PC-9 (cell line): ENCODE measurements at regions of chr11 and their contacts with region 1.

Region 1: GRCh38 chr11:236774-237767 is at the start of gene PSMD13:
- DNase-seq: peak in 1 of 2 experiments; percentile 78
- H3K4me3 ChIP-seq: peak within 1 kb of the TSS; percentile 65
- H3K27ac ChIP-seq: peak within 1 kb of the TSS; percentile 66
- H3K4me1 ChIP-seq: peaks cover 9% of the 10 kb centered on the region
- H3K27me3 ChIP-seq: no peaks in the 10 kb centered on the region
- CTCF ChIP-seq: no peak
- total RNA-seq, gene PSMD13: 143 and 147 TPM in 2 replicates

Region 2: GRCh38 chr11:207208-207862 is 29.7 kb before region 1 on chr11 and contains the starts of genes BET1L and RIC8A:
- CTCF ChIA-PET with region 1: no interaction called
- POLR2A ChIA-PET with region 1: no interaction called
- intact Hi-C with region 1: loop called (anchors 1 kb)
- DNase-seq: peak; percentile 89 to 95
- H3K4me3 ChIP-seq: peak within 1 kb of the TSS; percentile 67
- H3K27ac ChIP-seq: peak within 1 kb of the TSS; percentile 89
- H3K4me1 ChIP-seq: peaks cover 11% of the 10 kb centered on the region
- H3K27me3 ChIP-seq: no peaks in the 10 kb centered on the region
- CTCF ChIP-seq: no peak
- total RNA-seq, gene BET1L: 45.7 and 60.6 TPM in 2 replicates
- total RNA-seq, gene RIC8A: 115 and 129 TPM in 2 replicates

Region 3: GRCh38 chr11:215581-216037 is 21.5 kb before region 1 on chr11:
- CTCF ChIA-PET with region 1: no interaction called
- POLR2A ChIA-PET with region 1: interaction called, 16 read pairs
- intact Hi-C with region 1: no loop called
- DNase-seq: no peak
- H3K4me3 ChIP-seq: no peak overlapping the region
- H3K27ac ChIP-seq: no peak overlapping the region
- H3K4me1 ChIP-seq: no peaks in the 10 kb centered on the region
- H3K27me3 ChIP-seq: no peaks in the 10 kb centered on the region
- CTCF ChIP-seq: no peak

Region 4: DNA sequence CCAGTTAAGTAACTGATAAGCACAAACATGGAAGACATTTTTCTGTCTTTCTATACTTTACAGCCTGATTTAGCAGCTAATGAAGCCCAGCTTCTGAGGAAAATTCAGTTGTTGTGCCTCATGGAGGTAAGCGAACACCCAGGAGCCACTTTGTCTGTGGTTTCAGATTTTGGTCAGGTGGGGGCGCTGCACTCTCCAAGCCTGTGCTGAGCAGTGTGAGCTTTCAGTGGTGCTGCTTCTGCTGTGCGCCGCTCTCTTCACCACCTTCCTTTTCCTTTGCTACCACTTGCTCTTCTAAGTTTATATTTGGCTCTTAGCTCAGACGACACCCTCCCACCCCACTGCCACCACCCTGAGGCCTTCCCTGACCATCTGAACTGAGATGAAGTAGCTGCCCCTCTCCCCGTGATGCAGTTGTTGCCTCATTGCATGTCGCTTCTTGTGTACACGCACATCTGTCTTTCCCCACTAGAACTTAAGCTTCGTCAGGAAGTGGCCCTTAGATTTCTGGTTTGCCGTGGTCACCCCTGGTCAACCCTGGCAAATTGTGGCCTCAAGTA is 13.7 kb after region 1 on chr11:
- CTCF ChIA-PET with region 1: no interaction called
- POLR2A ChIA-PET with region 1: interaction called, 10 read pairs
- intact Hi-C with region 1: no loop called
- DNase-seq: peak in 1 of 2 experiments; percentile 51
- H3K4me3 ChIP-seq: no peak overlapping the region
- H3K27ac ChIP-seq: no peak overlapping the region
- H3K4me1 ChIP-seq: no peaks in the 10 kb centered on the region
- H3K27me3 ChIP-seq: no peaks in the 10 kb centered on the region
- CTCF ChIP-seq: peak; percentile 67

Region 5: DNA sequence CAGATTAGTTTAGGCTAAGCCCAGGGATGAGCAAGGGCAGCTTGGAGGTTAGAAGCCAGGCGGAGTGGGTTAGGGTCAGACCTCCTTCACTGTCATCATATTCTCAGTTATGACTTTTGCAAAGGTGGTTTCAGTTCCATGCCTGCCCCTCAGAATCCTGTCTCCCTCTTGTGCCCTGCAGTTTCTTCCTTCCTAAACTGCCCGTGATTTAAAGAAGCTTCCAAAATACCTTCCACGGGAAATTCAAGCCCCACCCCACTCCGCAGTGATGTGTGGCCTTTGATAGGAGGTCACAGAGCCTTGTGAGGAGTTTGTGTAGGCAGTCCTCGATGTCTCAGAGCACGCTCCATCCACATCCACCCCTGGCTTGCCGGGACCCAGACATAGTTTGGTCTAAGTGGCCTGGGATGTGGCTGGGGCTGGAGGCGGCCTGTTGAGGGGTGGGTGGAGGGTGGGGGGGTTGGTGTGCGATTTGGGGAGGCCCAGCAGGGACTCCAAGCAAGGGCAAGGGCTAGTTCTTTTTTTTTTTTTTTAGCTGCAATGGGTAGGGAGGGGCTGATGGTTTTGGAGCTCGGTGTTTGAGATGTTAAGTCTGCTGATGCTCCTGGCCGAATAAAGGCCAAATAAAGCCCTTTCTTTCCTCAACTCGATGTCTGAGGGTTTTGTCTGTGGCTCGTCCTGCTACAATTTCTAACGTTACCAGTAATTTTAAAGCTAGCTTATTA is 75.2 kb after region 1 on chr11:
- CTCF ChIA-PET with region 1: interaction called, 13 read pairs
- POLR2A ChIA-PET with region 1: no interaction called
- intact Hi-C with region 1: no loop called
- DNase-seq: no peak
- H3K4me3 ChIP-seq: no peak overlapping the region
- H3K27ac ChIP-seq: no peak overlapping the region
- H3K4me1 ChIP-seq: peaks cover 10% of the 10 kb centered on the region
- H3K27me3 ChIP-seq: no peaks in the 10 kb centered on the region
- CTCF ChIP-seq: no peak